ENCODE measurements at regions of chr9 and their contacts with region 1.

Region 1: GRCh38 chr9:127503947-127504782 is 52.9 kb downstream of the LRSAM1 start:
- DNase-seq: peak; percentile 94
- ATAC-seq: peak; percentile 84
- H3K4me3 Mint-ChIP-seq: no peak overlapping the region
- H3K27ac Mint-ChIP-seq: no peak overlapping the region
- H3K4me1 Mint-ChIP-seq: no peaks in the 10 kb centered on the region
- H3K27me3 Mint-ChIP-seq: no peaks in the 10 kb centered on the region
- CTCF ChIP-seq: peak; percentile 89

Region 2: DNA sequence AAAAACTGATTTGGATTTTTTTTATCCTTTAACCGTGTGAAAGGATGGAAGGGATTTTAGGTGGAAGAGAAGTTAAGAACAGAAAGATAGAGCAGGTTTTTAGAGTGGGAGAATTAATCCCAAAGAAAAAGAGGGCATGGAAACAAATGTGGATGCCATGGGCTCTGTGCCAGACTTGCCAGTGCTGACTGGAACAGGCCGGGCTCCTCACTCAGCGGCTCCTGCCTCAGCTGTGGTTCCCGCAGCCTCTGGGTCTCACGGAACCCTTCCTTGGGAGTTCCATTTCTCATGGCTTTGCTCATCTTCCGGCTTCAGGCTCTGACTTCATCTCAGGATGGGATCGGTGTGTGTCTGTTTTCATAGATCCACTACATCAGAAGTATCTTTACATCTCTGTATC is 137.6 kb before region 1 on chr9:
- CTCF ChIA-PET with region 1: no interaction called
- POLR2A ChIA-PET with region 1: no interaction called
- DNase-seq: no peak
- ATAC-seq: no peak
- H3K4me3 Mint-ChIP-seq: no peak overlapping the region
- H3K27ac Mint-ChIP-seq: 0 out of 2 replicates have a peak overlapping the region, but pooled peaks have one; percentile 22
- H3K4me1 Mint-ChIP-seq: peaks cover 14% of the 10 kb centered on the region
- H3K27me3 Mint-ChIP-seq: no peaks in the 10 kb centered on the region
- CTCF ChIP-seq: no peak

Region 3: DNA sequence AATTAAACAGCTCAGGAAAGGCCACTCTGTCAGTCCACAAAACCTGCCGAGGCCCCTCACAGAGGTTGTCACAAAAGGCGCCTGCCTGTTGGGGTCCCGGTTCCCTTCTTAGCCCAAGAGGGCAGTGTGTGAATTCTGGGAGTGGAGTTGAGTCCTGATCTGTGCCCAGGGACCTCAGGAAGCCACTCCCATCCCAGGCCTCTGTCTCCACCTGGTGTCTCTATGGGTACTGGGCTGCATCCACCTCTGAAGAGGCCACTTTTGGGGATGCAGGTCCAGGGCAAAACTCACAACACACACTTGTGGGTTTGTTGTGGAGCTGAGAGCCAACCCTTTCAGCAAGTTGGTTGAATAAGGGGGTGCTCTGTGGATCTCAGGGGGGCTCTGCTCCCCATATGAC is 33.6 kb after region 1 on chr9:
- CTCF ChIA-PET with region 1: interaction called, 32 read pairs
- POLR2A ChIA-PET with region 1: no interaction called
- DNase-seq: peak; percentile 48
- ATAC-seq: peak; percentile 87
- H3K4me3 Mint-ChIP-seq: no peak overlapping the region
- H3K27ac Mint-ChIP-seq: no peak overlapping the region
- H3K4me1 Mint-ChIP-seq: peaks cover 15% of the 10 kb centered on the region
- H3K27me3 Mint-ChIP-seq: no peaks in the 10 kb centered on the region
- CTCF ChIP-seq: no peak

Region 4: DNA sequence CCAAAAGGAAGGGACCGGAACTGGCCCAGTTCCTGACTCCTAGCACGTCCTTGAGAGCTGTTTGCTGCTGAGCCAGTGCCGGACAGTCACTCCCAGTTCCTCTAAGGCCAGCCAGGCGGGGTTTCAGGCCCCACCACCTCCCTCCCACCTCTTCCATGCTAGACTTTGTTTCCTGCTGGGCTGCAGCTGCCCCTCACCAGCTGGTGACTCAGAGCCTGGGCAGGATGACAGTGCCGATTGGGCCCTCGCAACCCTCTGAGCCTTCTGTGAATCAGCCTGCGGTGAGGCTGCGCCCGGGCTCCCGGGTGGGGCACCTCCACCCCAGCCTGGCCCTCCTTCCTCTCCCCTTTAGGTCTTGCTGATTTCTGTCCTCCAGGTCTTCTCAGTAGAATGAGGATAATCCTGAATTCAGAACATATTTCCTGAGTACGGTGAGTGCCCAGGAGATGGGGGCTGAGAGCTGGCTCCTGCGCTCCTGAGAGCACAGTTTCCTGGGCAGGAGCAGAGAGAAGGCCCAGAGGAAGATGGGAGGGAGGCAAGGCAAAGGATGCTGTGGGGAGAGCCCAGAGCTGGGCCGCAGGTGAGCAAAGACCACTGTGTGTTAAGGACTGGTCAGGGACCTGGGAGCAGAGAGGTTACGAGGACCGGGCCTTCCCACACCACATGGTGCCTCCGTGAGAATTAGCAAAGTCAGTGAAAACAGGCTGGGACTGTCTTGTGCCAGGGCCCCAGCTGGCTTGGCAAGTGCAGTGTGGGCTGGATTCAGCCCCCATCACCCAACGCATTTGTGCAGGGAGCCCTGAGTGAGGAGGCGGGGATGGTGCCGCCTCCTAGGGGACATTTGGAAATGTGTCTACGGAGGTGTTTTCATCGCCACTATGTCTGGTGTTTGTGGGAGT is 75.0 kb after region 1 on chr9:
- CTCF ChIA-PET with region 1: interaction called, 44 read pairs
- POLR2A ChIA-PET with region 1: no interaction called
- DNase-seq: peak; percentile 50
- ATAC-seq: peak; percentile 75
- H3K4me3 Mint-ChIP-seq: no peak overlapping the region
- H3K27ac Mint-ChIP-seq: 0 out of 2 replicates have a peak overlapping the region, but pooled peaks have one; percentile 48
- H3K4me1 Mint-ChIP-seq: peaks cover 16% of the 10 kb centered on the region
- H3K27me3 Mint-ChIP-seq: no peaks in the 10 kb centered on the region
- CTCF ChIP-seq: no peak

Region 5: GRCh38 chr9:127595611-127596010 is 91.4 kb after region 1 on chr9:
- CTCF ChIA-PET with region 1: interaction called, 11 read pairs
- POLR2A ChIA-PET with region 1: no interaction called
- DNase-seq: no peak
- ATAC-seq: no peak
- H3K4me3 Mint-ChIP-seq: no peak overlapping the region
- H3K27ac Mint-ChIP-seq: no peak overlapping the region
- H3K4me1 Mint-ChIP-seq: peaks cover 10% of the 10 kb centered on the region
- H3K27me3 Mint-ChIP-seq: no peaks in the 10 kb centered on the region
- CTCF ChIP-seq: no peak